HEK293 (cell line): ENCODE measurements at regions of chr15 and their contacts with region 1.

Region 1: DNA sequence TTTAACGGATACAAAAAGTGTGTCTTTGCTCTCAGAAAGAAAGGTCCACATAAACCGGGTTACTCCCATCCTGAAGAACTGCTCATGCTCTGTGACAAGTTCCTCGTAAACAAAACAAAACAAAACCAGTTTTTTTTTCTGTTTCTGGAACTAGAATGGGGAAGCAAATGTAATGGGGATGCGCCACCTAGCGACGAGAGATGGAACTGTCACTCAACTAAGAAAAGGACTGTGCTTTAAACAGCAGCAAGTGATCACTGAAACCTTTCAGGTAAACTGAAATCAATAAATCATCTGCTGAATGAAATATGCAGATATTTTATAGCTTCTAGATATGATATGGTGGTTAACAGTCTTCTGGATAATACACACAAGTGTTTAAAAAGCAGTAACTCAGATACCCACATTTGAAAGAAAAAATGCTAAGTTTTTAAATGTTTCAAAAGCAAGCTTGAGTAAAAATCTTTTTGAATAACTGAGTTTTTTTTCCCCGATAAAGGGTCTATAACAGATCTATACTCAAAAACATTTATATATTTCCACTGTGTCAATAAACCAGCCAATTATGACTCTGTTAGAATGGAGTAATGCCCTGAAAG is 10.9 kb downstream of the TM2D3 start:
- H3K4me3 ChIP-seq: no peak overlapping the region
- H3K27ac ChIP-seq: no peak overlapping the region
- H3K4me1 ChIP-seq: peaks cover 4% of the 10 kb centered on the region; the same call in 1 of the 2 replicates
- CTCF ChIP-seq: peak; percentile 73

Region 2: DNA sequence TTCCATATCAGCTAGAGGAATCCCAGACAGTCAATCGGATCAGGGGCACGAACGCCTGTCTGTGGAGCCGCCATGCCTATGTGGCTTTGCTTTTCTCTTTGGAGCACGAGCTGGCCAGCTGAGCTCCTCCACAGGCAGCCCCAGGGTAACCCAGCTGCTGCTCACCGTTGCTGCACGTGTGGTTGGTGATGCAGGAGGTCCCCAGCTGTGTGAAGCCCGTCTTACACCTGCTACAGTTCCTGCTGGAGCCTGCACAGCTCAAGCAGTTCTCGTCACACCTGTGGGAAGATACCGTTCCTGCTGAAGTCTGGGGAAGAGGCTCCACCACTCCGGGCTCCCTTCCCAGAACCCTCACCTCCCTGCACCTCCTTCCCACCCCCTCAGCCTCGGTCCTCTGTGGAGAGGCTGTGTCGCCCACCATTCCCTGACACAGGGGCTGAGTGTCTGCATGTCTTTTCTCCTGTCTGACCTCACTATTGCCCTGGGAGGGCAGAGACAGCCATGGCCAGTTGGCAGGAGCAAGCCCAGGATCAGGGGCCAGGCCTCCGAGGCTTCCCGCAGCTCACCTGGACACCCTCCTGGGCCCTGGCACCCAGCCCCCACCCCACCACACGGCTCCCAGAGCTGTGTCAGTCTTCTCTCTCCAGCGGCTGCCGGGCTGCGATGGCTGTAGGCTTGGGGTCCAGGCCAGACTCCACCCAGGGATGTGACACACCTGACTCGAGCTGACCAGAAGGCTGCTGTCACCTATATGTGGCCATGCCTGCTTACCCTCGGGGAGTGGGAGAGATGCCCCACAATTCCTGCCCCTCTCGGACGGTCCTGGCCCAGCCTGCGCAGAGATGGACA is 334.0 kb before region 1 on chr15:
- CTCF ChIA-PET with region 1: interaction called, 20 read pairs
- POLR2A ChIA-PET with region 1: no interaction called
- H3K4me3 ChIP-seq: no peak overlapping the region
- H3K27ac ChIP-seq: no peak overlapping the region
- H3K4me1 ChIP-seq: no peaks in the 10 kb centered on the region
- CTCF ChIP-seq: no peak

Region 3: GRCh38 chr15:101451266-101451799 is 189.9 kb before region 1 on chr15:
- CTCF ChIA-PET with region 1: no interaction called
- POLR2A ChIA-PET with region 1: no interaction called
- H3K4me3 ChIP-seq: no peak overlapping the region
- H3K27ac ChIP-seq: no peak overlapping the region
- H3K4me1 ChIP-seq: no peaks in the 10 kb centered on the region
- CTCF ChIP-seq: no peak

Region 4: GRCh38 chr15:101501703-101502373 is 139.4 kb before region 1 on chr15:
- CTCF ChIA-PET with region 1: interaction called, 37 read pairs
- POLR2A ChIA-PET with region 1: no interaction called
- H3K4me3 ChIP-seq: no peak overlapping the region
- H3K27ac ChIP-seq: no peak overlapping the region
- H3K4me1 ChIP-seq: no peaks in the 10 kb centered on the region
- CTCF ChIP-seq: peak; percentile 93

Region 5: GRCh38 chr15:101568309-101568708 is 73.0 kb before region 1 on chr15:
- CTCF ChIA-PET with region 1: interaction called, 18 read pairs
- POLR2A ChIA-PET with region 1: no interaction called
- H3K4me3 ChIP-seq: no peak overlapping the region
- H3K27ac ChIP-seq: no peak overlapping the region
- H3K4me1 ChIP-seq: no peaks in the 10 kb centered on the region
- CTCF ChIP-seq: no peak

Region 6: GRCh38 chr15:101608201-101608600 is 33.1 kb before region 1 on chr15:
- CTCF ChIA-PET with region 1: interaction called, 15 read pairs
- POLR2A ChIA-PET with region 1: no interaction called
- H3K4me3 ChIP-seq: no peak overlapping the region
- H3K27ac ChIP-seq: no peak overlapping the region
- H3K4me1 ChIP-seq: peaks cover 3% of the 10 kb centered on the region
- CTCF ChIP-seq: peak; percentile 48; the same call in 1 of the 2 replicates

Region 7: DNA sequence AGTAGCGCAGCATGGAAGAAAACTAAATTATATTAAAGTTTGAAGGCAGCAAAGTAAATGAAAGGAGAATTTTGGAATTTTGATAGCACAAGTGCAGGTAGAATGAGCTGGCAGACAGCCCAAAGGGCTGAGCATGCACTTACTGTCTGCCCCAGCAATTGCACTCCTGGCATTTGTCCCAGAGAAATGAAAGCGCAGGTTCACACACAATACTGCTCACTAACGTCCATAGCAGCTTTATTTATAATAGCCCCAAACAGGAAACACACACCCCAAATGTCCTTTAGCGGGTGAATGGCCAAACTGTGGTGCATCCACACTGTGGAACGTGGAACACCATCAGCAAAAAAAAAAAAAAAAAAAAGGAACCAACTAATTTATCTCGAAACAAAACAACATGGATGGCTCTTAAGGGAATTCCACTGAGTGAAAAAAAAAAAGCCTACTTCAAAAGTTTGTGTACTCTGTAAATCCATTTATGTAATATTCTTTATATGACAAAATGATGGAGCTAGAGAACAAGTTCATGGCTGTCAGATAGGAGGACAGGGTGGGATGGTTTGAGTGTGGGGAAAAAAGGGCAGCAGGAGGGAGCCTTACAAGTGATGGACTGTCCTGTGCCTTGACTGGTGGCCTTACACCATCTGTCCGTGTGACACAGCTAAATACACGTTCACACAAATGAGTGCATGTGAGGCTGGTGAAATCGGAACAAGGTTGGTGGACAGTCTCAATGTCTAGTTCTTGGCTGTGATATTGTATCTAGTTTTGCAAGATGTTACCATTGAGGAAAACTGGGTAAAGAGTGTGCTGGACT is 16.9 kb after region 1 on chr15:
- CTCF ChIA-PET with region 1: interaction called, 20 read pairs
- POLR2A ChIA-PET with region 1: no interaction called
- H3K4me3 ChIP-seq: no peak overlapping the region
- H3K27ac ChIP-seq: no peak overlapping the region
- H3K4me1 ChIP-seq: peaks cover 11% of the 10 kb centered on the region
- CTCF ChIP-seq: no peak